Calu3 (cell line): ENCODE measurements at regions of chr2 and their contacts with region 1.

Region 1: DNA sequence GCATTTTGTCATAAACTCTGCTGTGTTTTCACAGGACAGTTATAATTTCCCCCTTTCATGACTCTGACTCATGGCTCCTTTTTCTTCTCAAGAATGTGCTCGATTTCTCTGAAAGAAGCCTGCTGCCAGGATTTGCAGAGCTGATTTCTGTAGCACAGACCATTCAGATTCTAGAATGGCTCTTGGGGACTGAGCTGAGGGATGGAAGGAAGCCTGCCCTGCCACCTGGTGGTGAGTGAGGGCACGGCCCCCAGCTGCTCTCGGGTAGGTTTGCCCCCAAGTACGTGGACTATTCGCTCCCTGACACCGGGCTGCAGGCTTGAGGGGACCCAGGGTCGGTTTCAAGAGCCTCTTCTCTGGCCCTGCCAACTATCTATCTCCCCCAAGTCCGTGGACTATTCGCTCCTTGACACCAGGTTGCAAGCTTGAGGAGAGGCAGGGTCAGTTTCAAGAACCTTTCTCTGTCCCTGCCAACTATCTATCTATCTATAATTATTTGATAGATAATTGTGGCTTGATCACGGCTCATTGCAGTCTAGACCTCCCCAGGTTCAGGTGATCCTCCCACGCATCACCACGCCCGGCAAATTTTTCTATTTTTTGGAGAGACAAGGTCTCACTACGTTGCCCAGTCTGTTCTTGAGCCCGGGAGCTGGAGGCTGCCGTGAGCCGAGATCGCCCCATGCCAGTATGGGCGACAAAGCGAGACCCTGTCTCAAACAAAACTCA is 1.4 kb upstream of the SMYD5 start:
- DNase-seq: peak; percentile 82
- H3K4me3 Mint-ChIP-seq: no peak overlapping the region
- H3K27ac Mint-ChIP-seq: no peak overlapping the region
- H3K4me1 Mint-ChIP-seq: peaks cover 37% of the 10 kb centered on the region
- H3K27me3 Mint-ChIP-seq: peaks cover 32% of the 10 kb centered on the region
- CTCF ChIP-seq: peak; percentile 87

Region 2: GRCh38 chr2:73176881-73177644 is 35.5 kb before region 1 on chr2:
- CTCF ChIA-PET with region 1: interaction called, 38 read pairs
- intact Hi-C with region 1: loop called (anchors 5 kb)
- DNase-seq: peak; percentile 94
- H3K4me3 Mint-ChIP-seq: peak overlapping the region; percentile 86
- H3K27ac Mint-ChIP-seq: no peak overlapping the region
- H3K4me1 Mint-ChIP-seq: peaks cover 9% of the 10 kb centered on the region
- H3K27me3 Mint-ChIP-seq: peaks cover 86% of the 10 kb centered on the region
- CTCF ChIP-seq: peak; percentile 95

Region 3: DNA sequence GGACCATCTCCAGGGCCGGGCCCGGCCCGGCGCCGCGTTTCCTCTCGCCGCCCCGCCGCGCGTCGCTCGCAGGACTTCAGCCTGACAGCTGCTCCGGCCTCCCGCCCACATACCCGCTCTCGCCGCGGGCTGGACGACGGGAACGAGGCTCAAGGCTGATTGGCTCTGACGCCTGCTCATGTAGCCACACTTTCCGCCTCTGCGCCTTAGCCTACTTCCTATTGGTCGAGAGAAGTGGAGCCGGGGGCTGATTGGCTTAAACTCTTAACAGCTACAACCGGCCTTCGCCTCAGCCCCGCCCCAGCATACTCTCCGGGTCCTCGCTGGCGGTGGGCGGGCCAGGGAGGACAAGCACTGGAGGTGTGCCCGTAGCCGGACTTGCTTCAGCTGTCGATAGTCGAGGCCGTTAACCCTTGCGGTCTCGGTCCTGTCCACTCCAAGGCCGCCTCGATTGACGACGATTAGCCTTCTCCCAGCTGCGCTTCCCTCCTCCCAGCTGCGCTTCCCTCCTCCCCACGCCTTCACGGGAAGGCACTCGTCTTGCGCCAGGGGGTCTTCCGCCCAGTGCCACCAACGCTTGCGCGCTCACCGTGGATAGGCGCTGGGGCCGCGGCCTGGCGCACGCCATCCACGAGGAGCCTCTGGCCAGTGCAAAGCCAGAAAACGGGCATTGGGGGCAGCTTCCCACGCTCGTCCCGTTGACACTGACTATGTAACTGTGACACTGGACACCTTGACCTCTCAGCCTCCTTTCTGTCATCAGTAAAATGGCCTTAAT is 20.7 kb after region 1 on chr2 and contains the start of gene PRADC1:
- CTCF ChIA-PET with region 1: interaction called, 10 read pairs
- intact Hi-C with region 1: no loop called
- DNase-seq: peak; percentile 96
- H3K4me3 Mint-ChIP-seq: peak within 1 kb of the TSS; percentile 92
- H3K27ac Mint-ChIP-seq: peak within 1 kb of the TSS; percentile 97
- H3K4me1 Mint-ChIP-seq: peaks cover 26% of the 10 kb centered on the region
- H3K27me3 Mint-ChIP-seq: no peaks in the 10 kb centered on the region
- CTCF ChIP-seq: no peak
- total RNA-seq, gene PRADC1: 13.2 and 13.8 TPM in 2 replicates